ENCODE measurements at regions of chr2 and their contacts with region 1.

Region 1: GRCh38 chr2:223944703-223945531 is at the start of gene WDFY1:
- DNase-seq: peak; percentile 94
- total RNA-seq, gene WDFY1: 16.4 TPM

Region 2: GRCh38 chr2:223837287-223838061 is 107.4 kb before region 1 on chr2 and contains the start of gene AP1S3:
- intact Hi-C with region 1: loop called (anchors 5 kb)
- DNase-seq: peak; percentile 88
- total RNA-seq, gene AP1S3: 0.19 TPM

Region 3: DNA sequence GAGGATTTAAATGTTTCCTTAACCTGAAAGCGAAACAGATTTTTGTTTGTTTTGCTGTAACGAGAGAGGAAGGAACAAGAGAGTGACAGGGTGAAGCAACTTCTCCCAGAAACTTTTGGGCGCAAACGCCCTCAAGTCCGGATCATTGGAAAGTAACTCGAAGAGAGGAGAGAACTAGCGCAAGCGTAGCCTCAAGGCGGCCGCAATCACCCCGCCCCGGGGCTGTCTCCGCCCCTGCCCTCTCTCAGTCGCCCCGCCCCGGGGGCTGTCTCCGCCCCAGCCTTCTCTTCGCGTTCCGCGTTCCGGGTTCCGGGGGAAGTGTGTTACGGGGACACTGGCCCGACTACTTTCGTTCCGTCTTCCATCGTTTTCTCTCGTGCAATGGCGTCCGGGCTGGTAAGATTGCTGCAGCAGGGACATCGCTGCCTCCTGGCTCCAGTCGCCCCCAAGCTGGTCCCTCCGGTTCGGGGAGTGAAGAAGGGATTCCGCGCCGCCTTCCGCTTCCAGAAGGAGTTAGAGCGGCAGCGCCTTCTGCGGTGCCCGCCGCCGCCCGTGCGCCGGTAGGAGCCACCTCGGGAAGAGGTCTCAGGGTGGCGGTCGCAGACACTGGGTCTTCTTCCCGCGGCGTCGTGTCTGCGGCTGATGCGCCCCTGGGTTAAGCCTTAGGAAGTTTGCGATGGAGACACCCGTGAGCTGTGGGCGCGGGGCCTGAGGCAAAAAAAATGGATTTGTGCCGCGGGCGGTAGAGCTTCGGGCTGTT is 12.4 kb after region 1 on chr2 and contains the start of gene MRPL44:
- intact Hi-C with region 1: loop called (anchors 1 kb)
- DNase-seq: peak; percentile 99
- total RNA-seq, gene MRPL44: 34.2 TPM

Region 4: DNA sequence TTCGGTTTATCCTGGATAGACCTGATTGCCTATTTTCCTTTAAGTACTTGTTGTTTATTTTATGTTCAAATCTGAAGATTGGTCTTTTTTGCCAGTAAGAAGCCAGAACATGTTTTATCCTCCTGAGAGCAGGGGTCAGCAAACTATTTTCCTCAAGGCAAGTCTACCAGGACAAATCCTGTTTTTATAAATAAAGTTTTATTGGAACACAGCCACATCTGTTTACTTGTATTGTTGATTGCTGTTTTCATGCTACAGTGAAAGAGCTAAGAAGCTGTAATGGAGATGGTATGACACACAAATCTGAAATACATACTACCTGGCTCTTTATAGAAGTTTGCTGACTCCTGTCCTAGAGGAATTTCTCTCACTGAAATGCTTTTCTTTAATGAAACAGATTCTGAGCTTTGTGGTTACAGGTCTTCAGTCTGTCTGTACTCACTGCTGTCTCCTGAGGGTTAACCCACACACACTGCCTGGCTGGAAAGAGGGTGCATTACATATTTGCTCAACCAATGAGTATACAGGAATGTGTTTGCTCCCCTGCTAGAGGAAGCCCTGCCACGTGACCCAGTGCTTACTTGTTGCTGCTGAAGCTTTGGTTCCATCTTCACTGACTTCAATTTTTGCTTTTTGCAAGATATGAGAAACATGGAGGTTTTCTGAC is 34.9 kb after region 1 on chr2:
- intact Hi-C with region 1: no loop called
- DNase-seq: no peak

Measured in cardiac septum (tissue), 1 donor.